ENCODE measurements at regions of chr14 and their contacts with region 1.

Region 1: DNA sequence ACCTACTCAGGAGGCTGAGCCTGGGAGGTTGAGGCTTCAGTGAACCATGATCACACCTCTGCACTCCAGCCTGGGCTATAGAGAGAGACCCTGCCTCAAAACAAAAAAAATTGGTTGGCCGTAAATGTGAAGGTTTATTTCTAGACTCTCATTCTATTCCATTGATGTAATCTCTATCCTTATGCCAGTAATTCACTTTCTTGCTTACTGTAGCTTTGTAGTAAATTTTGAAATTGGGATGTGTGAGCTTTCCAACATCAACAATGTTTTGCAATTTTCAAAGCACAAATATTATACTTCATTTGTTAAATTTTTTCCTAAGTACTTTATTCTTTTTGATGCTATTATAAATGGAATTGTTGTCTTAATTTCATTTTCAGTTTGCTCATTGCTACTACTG is 24.6 kb downstream of the LIN52 start:
- DNase-seq: no peak
- H3K4me3 ChIP-seq: no peak overlapping the region
- H3K27ac ChIP-seq: no peak overlapping the region
- H3K4me1 ChIP-seq: no peaks in the 10 kb centered on the region
- H3K27me3 ChIP-seq: no peaks in the 10 kb centered on the region
- CTCF ChIP-seq: no peak
- POLR2A ChIP-seq: no peak

Region 2: GRCh38 chr14:74249433-74250375 is 140.3 kb after region 1 on chr14:
- intact Hi-C with region 1: loop called (anchors 5 kb)
- DNase-seq: no peak
- H3K4me3 ChIP-seq: no peak overlapping the region
- H3K27ac ChIP-seq: no peak overlapping the region
- H3K4me1 ChIP-seq: no peaks in the 10 kb centered on the region
- H3K27me3 ChIP-seq: no peaks in the 10 kb centered on the region
- CTCF ChIP-seq: no peak
- POLR2A ChIP-seq: no peak

Measured in thyroid gland (tissue), 4 donors.